Sigmoid colon (tissue), 7 donors: ENCODE measurements at regions of chr7 and their contacts with region 1.

Region 1: GRCh38 chr7:27921081-27921836 is 181.3 kb downstream of the TAX1BP1 start:
- DNase-seq: no peak
- H3K4me3 ChIP-seq: peak overlapping the region in 1 of 4 donors; percentile 3
- H3K27ac ChIP-seq: peak overlapping the region in 2 of 4 donors; percentile 17 to 41
- H3K4me1 ChIP-seq: peaks cover 0 to 52% (median 24%) of the 10 kb centered on the region in 4 donors
- H3K27me3 ChIP-seq: no peaks in the 10 kb centered on the region
- CTCF ChIP-seq: peak; percentile 34 to 50 (median 38)
- EP300 ChIP-seq: no peak
- POLR2A ChIP-seq: no peak

Region 2: DNA sequence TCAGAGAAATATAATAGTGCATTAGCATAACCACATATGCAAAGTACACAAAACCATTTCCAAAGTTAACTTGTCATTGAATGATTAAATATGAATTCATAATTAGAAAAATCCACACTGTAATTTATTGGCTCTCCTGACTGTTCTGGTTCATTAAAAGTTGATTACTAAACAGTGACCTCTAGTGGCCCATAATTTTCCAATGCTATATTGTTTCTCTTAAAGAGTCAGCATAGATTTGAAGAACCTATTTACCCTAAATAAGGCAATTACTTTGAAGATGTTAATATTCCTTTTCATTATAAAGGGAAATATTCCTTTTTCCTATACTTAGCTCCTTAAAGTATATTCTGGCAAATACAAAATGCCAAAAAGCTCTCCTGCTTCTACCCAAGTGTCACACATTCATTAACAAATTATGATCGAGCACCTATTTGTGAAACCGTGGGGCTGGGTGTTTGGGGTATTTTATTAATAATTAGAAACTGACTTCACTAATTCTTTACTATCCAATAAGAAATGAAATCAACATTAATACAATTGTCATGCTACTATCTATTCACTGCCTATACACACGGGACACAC is 344.8 kb before region 1 on chr7:
- intact Hi-C with region 1: loop called (anchors 5 kb)
- DNase-seq: no peak
- H3K4me3 ChIP-seq: no peak overlapping the region
- H3K27ac ChIP-seq: no peak overlapping the region
- H3K4me1 ChIP-seq: no peaks in the 10 kb centered on the region
- H3K27me3 ChIP-seq: no peaks in the 10 kb centered on the region
- CTCF ChIP-seq: peak in 3 of 4 experiments; percentile 23 to 58 (median 47)
- EP300 ChIP-seq: no peak
- POLR2A ChIP-seq: no peak

Region 3: GRCh38 chr7:27739909-27740448 is 181.3 kb before region 1 on chr7 and contains the start of gene TAX1BP1:
- intact Hi-C with region 1: loop called (anchors 5 kb)
- DNase-seq: peak; percentile 98
- H3K4me3 ChIP-seq: peak within 1 kb of the TSS; percentile 68 to 93 (median 90)
- H3K27ac ChIP-seq: peak within 1 kb of the TSS; percentile 93 to 99 (median 97)
- H3K4me1 ChIP-seq: peaks cover 0 to 47% (median 31%) of the 10 kb centered on the region in 4 donors
- H3K27me3 ChIP-seq: no peaks in the 10 kb centered on the region
- CTCF ChIP-seq: no peak
- EP300 ChIP-seq: peak in 1 of 4 donors; percentile 18
- POLR2A ChIP-seq: peak; percentile 99
- total RNA-seq, gene TAX1BP1: 109 to 170 (median 138) TPM

Region 4: DNA sequence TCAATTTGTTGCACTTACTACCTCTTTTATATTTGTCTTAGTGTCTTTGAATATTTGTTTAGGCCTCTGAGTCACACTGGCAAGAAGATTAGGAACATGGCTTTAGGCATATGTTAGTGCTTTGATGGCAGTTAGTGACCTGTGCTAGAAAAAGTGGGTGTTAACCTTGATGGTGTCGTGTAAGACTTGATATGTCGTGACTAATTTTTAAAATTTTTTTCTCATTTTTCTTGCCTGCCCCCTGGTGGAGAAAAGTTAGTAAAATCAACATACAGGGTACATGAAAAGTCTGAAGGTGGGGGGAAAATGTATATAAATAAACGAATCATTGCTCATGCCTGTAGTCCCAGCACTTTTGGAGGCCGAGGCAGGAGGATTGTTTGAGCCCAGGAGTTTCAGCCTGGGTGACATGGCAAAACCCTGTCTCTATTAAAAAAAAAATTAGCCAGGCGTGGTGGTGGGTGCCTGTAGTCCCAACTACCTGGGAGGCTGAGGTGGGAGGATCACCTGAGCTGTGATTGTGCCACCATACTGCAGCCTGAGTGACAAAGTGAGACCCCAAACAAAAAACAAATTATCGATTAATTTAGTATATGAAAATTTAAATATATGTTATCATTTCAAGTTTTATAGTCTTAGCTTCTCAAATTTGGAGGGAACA is 136.7 kb before region 1 on chr7:
- intact Hi-C with region 1: loop called (anchors 10 kb)
- DNase-seq: no peak
- H3K4me3 ChIP-seq: no peak overlapping the region
- H3K27ac ChIP-seq: no peak overlapping the region
- H3K4me1 ChIP-seq: peaks cover 0 to 9% (median 8%) of the 10 kb centered on the region in 4 donors
- H3K27me3 ChIP-seq: no peaks in the 10 kb centered on the region
- CTCF ChIP-seq: peak in 3 of 4 experiments; percentile 36 to 46 (median 42)
- EP300 ChIP-seq: no peak
- POLR2A ChIP-seq: no peak

Region 5: GRCh38 chr7:28020302-28020940 is 99.2 kb after region 1 on chr7:
- intact Hi-C with region 1: loop called (anchors 5 kb)
- DNase-seq: peak; percentile 88
- H3K4me3 ChIP-seq: no peak overlapping the region
- H3K27ac ChIP-seq: peak overlapping the region in 2 of 4 donors; percentile 75 to 76
- H3K4me1 ChIP-seq: peaks cover 0 to 70% (median 56%) of the 10 kb centered on the region in 4 donors
- H3K27me3 ChIP-seq: no peaks in the 10 kb centered on the region
- CTCF ChIP-seq: peak; percentile 79 to 84 (median 83)
- EP300 ChIP-seq: no peak
- POLR2A ChIP-seq: no peak